ENCODE measurements at regions of chr1 and their contacts with region 1.

Region 1: GRCh38 chr1:244272471-244273261 is 179.0 kb downstream of the ADSS2 start:
- H3K4me3 ChIP-seq: no peak overlapping the region
- H3K27ac ChIP-seq: no peak overlapping the region
- H3K4me1 ChIP-seq: no peaks in the 10 kb centered on the region
- CTCF ChIP-seq: peak; percentile 99

Region 2: GRCh38 chr1:243343970-243344937 is 928.4 kb before region 1 on chr1:
- CTCF ChIA-PET with region 1: interaction called, 40 read pairs
- POLR2A ChIA-PET with region 1: no interaction called
- H3K4me3 ChIP-seq: no peak overlapping the region
- H3K27ac ChIP-seq: no peak overlapping the region
- H3K4me1 ChIP-seq: no peaks in the 10 kb centered on the region
- CTCF ChIP-seq: peak; percentile 64

Region 3: DNA sequence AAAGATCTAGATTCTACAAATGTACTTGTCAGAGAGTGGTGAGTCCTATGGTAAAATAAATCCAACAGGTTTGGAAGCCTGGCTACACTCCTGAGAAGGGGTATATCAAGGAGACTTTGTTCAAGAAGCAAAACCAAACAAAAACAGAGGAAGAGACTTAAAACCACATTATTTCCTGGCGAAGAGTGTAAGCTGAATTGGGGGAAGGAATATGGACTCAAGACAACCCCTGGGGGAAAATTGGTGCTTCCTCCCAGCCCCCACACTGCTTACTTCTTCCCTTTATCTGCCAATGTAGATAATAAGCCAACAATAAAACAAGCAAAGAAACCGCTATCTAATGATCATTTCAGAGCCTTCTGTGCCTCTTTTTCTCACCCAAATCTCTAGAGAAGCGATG is 269.9 kb before region 1 on chr1:
- CTCF ChIA-PET with region 1: interaction called, 12 read pairs
- POLR2A ChIA-PET with region 1: no interaction called
- H3K4me3 ChIP-seq: no peak overlapping the region
- H3K27ac ChIP-seq: no peak overlapping the region
- H3K4me1 ChIP-seq: no peaks in the 10 kb centered on the region
- CTCF ChIP-seq: no peak

Region 4: GRCh38 chr1:244214009-244214967 is 58.4 kb before region 1 on chr1:
- CTCF ChIA-PET with region 1: interaction called, 13 read pairs
- POLR2A ChIA-PET with region 1: no interaction called
- H3K4me3 ChIP-seq: no peak overlapping the region
- H3K27ac ChIP-seq: peak overlapping the region; percentile 24
- H3K4me1 ChIP-seq: peaks cover 7% of the 10 kb centered on the region
- CTCF ChIP-seq: no peak

Region 5: GRCh38 chr1:244296447-244296846 is 23.8 kb after region 1 on chr1:
- CTCF ChIA-PET with region 1: interaction called, 44 read pairs
- POLR2A ChIA-PET with region 1: no interaction called
- H3K4me3 ChIP-seq: no peak overlapping the region
- H3K27ac ChIP-seq: no peak overlapping the region
- H3K4me1 ChIP-seq: no peaks in the 10 kb centered on the region
- CTCF ChIP-seq: no peak

Region 6: DNA sequence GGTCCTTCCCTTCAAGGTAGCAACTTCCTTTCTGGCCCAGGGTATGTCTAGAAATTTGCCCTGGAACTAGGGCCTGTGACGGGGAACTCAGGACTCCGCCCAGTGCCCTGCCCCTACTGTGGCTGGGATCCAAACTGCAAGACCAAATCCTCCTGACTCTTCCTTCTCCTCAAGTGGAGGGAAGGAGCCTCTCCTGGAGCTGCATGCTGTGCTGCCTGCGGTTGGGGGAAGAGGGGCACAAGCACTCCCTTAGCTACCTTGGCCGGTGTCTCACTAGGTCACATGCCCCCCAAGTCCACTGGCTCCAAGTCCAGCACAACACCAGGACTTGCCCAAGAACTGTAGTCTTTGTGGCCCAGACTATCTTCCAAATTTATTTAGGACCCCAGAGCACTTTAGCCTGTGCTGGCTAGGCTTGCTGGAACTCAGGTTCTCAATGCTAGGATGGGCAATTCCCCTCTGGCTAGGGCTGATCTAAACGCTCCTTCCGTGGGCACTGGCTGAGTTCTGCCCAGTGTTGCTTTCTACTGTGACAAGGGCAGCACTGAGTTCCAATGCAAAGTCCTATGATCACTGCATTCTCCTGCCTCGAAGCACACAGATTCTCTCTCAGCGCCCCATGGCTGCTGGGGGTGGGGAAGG is 166.8 kb after region 1 on chr1:
- CTCF ChIA-PET with region 1: no interaction called
- POLR2A ChIA-PET with region 1: no interaction called
- H3K4me3 ChIP-seq: no peak overlapping the region
- H3K27ac ChIP-seq: no peak overlapping the region
- H3K4me1 ChIP-seq: peaks cover 18% of the 10 kb centered on the region
- CTCF ChIP-seq: no peak

Measured in HEK293 (cell line).